ENCODE measurements at regions of chr6 and their contacts with region 1.

Region 1: DNA sequence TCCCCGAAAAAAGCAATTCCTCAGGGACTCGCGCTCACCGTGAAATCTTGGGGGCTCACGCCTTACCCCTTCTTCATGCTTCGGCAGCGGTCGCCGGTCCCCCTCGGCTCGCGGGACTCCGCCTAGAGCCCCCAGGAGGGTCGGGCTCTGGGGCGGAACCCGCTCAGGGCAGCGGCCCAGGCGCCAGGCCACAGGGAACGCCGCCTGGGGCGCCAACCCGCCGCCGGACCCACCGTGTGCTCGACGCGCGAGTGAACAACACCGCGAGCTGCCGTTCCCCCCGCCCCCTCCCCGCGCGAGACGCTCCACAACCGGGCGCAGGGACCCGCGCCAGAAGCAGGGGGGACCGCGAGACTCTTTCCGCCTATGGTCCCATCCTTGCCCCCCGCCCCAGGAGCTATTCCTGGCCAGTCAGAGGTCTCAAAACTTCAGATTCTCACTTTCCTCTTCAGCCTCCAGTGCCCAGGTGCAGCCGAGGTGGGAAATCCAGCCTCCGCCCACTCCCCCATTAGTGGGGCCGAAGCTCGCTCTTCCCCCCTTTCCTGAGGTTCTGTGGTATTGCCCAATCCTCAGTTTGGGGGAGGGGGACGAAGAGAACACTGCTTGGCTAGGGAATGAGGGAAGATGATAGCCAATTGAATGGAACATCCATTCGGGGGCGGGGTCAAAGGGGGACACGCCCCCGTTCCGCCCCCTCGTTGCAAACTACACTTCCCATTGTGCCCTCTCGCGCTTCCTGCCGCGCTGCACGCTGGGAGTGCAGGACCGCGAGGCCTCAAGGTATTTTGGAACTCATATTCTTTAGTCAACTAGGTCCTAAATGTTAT is at the start of gene WASF1:
- DNase-seq: peak; percentile 98
- H3K4me3 ChIP-seq: peak within 1 kb of the TSS; percentile 86 to 95 (median 91)
- H3K27ac ChIP-seq: peak within 1 kb of the TSS; percentile 90
- H3K4me1 ChIP-seq: peaks cover 13% of the 10 kb centered on the region
- H3K27me3 ChIP-seq: no peaks in the 10 kb centered on the region
- CTCF ChIP-seq: no peak
- total RNA-seq, gene WASF1: 14.7 to 32.9 TPM

Region 2: DNA sequence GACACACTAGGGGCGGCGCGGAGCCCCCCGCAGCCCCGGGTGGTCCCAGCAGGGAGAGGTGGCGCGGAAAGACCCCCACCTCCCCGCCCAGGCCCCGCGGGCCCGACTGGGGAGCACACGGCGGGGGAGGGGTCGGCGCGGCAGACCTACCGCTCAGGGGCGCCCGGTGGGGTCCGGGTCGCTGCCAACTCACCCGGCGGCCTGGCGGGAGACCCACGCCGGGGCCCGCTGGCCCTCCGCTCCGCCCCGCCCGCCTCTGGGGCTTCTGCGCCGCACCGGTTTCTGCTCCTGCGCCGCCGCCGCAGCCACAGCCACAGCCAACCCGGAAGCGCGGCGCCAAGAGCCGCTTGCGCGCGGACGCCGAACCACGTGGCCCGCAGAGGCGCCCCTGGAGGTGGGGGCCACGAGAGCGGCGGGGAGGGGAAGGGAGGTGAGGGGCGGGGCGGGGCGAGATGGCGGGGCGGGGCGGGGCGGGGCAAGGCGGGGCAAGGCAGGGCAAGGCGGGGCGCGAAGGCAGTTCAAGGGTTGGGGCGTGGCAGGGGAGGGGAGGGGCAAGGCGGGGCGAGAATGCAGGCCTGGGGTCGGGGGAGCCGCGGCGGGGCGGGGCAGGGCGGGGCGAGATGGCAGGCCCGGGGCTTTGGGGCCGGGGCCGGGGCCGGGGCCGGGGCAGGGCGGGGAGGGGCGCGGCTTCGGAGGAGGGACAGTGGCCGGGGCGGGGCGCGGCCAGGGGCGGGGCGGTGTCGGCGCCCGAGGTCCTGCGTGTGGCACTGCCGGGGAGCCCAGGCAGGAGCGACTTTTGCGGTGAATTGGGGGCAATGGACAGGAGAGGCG is 696.5 kb before region 1 on chr6 and contains the start of gene ZBTB24:
- CTCF ChIA-PET with region 1: interaction called, 15 read pairs
- dilution Hi-C with region 1: no loop called
- in situ Hi-C with region 1: no loop called
- intact Hi-C with region 1: no loop called
- DNase-seq: peak; percentile 87
- H3K4me3 ChIP-seq: peak within 1 kb of the TSS; percentile 67 to 82 (median 70)
- H3K27ac ChIP-seq: peak within 1 kb of the TSS; percentile 68
- H3K4me1 ChIP-seq: peaks cover 16% of the 10 kb centered on the region
- H3K27me3 ChIP-seq: no peaks in the 10 kb centered on the region
- CTCF ChIP-seq: no peak
- total RNA-seq, gene ZBTB24: 7.9 to 10.0 TPM

Region 3: DNA sequence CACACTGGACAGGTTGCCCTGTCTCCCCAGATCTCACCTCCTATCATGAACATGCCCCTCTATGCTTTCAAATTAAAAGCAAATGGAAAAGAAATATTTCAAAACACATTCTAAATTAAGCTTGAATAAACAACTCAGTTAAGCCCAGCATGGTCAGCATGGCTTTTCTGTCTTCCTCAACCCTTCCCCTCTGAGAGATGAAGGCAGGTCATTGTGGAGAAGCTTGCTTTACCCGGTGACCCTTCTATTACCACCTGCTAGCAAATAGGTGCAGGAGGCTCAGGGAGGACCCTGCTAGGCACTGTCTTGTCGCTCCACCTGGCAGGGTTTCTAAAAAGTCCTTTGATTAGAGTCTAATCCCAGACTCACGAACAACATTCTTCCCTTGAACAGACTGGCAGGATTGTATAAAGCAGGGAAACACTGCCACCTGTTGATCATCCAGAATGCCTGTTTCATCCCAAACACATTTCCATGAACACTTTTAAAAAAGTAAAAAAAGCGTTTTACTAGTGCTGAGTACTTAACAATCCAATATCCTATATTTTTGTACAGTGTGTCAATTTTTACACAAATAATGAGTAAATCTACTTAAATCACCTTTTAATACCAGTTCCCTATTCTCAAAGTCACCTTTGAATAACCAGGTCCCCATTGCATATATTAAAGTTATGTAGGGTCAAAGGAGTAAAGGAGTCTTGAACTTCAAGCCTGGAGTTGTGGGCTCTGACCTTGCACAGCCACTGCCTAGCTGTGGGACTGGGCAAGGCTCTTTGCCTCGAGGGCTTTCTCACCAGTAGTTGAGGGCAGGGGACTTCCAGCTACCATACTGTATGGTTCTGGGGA is 126.0 kb before region 1 on chr6:
- CTCF ChIA-PET with region 1: no interaction called
- dilution Hi-C with region 1: no loop called
- in situ Hi-C with region 1: no loop called
- intact Hi-C with region 1: loop called (anchors 5 kb)
- DNase-seq: peak; percentile 29
- H3K4me3 ChIP-seq: no peak overlapping the region
- H3K27ac ChIP-seq: no peak overlapping the region
- H3K4me1 ChIP-seq: no peaks in the 10 kb centered on the region
- H3K27me3 ChIP-seq: peaks cover 7% of the 10 kb centered on the region
- CTCF ChIP-seq: peak; percentile 77 to 78

Region 4: GRCh38 chr6:110140650-110141049 is 39.0 kb before region 1 on chr6:
- CTCF ChIA-PET with region 1: no interaction called
- dilution Hi-C with region 1: no loop called
- in situ Hi-C with region 1: no loop called
- intact Hi-C with region 1: loop called (anchors 2 kb)
- DNase-seq: peak; percentile 65
- H3K4me3 ChIP-seq: no peak overlapping the region
- H3K27ac ChIP-seq: peak overlapping the region; percentile 79
- H3K4me1 ChIP-seq: peaks cover 12% of the 10 kb centered on the region
- H3K27me3 ChIP-seq: no peaks in the 10 kb centered on the region
- CTCF ChIP-seq: no peak

Region 5: DNA sequence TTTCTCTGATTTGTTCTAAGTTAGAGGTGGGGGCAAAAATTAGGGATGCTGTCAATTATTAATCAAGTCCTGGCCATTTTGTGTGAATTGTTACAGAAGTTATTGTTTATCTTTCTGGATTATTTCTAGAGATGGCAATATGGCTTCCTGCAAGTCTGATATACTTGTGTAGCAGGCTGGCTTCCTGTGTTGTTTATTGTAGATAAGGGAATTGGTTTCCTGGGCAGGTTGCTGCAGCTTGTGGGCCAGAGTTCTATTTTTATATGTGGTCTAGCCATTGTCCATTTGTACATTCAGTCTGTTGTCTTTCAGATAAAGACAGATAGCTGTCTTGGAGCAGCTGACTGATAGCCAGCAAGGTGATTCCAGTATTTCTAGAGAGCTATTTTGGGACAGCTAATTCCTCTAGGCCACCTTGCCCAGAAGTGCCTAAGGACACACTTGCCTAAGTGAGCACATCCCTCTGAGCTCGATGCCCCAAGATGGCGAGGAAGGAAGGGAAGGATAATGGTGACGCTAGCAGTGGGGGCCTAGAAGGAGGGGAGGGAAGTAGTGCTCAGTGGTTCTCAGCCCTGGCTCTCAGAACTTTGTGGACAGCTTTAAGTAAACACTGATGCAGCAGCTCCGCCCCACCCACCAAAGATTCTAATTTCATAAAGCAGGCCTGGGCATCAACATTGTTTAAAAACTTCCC is 210.2 kb after region 1 on chr6:
- CTCF ChIA-PET with region 1: no interaction called
- dilution Hi-C with region 1: no loop called
- in situ Hi-C with region 1: loop called in 1 of 2 experiments (anchors 25 kb)
- intact Hi-C with region 1: loop called (anchors 1 kb)
- DNase-seq: no peak
- H3K4me3 ChIP-seq: no peak overlapping the region
- H3K27ac ChIP-seq: no peak overlapping the region
- H3K4me1 ChIP-seq: no peaks in the 10 kb centered on the region
- H3K27me3 ChIP-seq: peaks cover 2% of the 10 kb centered on the region
- CTCF ChIP-seq: no peak